ENCODE measurements at regions of chr17 and their contacts with region 1.

Region 1: GRCh38 chr17:34420254-34420766 is 57.3 kb upstream of the CCL1 start:
- DNase-seq: peak; percentile 45 to 80
- H3K4me3 ChIP-seq: no peak overlapping the region
- H3K4me1 ChIP-seq: no peaks in the 10 kb centered on the region
- H3K27me3 ChIP-seq: 0 out of 2 replicates have a peak, but pooled peaks cover 2% of the 10 kb centered on the region

Region 2: DNA sequence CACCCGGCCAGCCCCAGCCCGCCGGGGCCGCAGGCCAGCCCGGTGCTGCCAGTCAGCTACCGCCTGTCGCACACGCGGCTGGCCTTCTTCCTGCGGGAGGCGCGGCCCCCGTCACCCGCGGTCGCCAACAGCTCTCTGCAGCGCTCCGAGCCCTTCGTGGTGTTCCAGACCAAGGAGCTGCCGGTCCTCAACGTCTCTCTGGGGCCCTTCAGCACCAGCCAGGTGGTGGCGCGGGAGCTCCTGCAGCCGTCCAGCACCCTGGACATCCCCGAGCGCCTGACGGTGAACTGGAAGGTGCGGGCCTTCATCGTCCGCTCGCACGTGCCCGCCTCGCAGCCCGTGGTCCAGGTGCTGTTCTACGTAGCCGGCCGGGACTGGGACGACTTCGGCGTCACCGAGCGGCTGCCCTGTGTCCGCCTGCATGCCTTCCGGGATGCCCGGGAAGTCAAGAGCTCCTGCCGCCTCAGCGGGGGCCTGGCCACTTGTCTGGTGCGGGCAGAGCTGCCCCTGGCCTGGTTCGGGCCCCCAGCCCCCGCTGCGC is 205.9 kb after region 1 on chr17:
- in situ Hi-C with region 1: loop called (anchors 10 kb)
- DNase-seq: no peak
- H3K4me3 ChIP-seq: no peak overlapping the region
- H3K4me1 ChIP-seq: no peaks in the 10 kb centered on the region
- H3K27me3 ChIP-seq: peaks cover 25% of the 10 kb centered on the region

Region 3: GRCh38 chr17:34892461-34893249 is 472.3 kb after region 1 on chr17:
- in situ Hi-C with region 1: loop called (anchors 10 kb)
- DNase-seq: peak in 1 of 2 experiments; percentile 29
- H3K4me3 ChIP-seq: no peak overlapping the region
- H3K4me1 ChIP-seq: no peaks in the 10 kb centered on the region
- H3K27me3 ChIP-seq: peaks cover 4% of the 10 kb centered on the region

Region 4: DNA sequence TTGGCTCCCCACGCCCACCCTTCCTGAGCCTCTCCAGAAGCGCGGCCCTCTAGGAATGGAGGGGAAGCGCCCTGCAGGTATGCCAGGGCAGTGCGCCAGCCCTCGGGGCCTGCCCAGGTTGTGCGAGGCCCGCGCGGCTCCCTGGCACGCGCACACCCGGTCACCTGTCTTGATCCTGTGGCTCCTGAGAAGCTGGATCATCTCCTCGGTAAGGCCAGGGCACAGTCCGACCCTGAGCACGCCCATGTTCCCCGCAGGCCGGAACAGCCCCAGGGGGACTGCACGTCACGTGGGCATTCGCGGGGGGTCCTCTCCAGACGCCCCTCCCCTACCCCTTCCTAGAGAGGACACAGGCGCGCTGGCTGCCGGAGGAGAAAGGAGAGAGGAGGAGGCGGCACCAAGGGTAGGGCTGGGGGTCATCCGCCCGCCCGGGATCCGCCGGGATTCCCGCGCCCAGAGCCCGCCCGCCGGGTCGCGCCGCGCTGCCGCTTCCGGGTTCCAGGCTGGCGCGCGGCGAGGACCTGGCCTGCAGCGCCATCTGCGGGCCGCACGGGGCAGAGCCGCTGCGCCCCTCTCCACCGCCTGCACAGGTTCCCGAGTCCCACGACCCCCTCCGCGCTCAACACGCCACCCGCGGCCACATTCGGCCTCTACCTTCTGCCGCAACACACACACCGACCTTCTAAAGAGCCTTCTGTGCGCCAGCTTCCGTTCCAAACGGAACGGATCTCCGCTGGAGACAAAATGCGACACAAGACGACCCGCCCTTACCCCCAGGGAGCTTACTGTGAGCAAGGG is 699.3 kb after region 1 on chr17 and contains the start of gene RAD51D:
- in situ Hi-C with region 1: loop called (anchors 10 kb)
- DNase-seq: peak; percentile 83 to 92
- H3K4me3 ChIP-seq: peak within 1 kb of the TSS; percentile 68
- H3K4me1 ChIP-seq: peaks cover 7% of the 10 kb centered on the region
- H3K27me3 ChIP-seq: no peaks in the 10 kb centered on the region

Region 5: DNA sequence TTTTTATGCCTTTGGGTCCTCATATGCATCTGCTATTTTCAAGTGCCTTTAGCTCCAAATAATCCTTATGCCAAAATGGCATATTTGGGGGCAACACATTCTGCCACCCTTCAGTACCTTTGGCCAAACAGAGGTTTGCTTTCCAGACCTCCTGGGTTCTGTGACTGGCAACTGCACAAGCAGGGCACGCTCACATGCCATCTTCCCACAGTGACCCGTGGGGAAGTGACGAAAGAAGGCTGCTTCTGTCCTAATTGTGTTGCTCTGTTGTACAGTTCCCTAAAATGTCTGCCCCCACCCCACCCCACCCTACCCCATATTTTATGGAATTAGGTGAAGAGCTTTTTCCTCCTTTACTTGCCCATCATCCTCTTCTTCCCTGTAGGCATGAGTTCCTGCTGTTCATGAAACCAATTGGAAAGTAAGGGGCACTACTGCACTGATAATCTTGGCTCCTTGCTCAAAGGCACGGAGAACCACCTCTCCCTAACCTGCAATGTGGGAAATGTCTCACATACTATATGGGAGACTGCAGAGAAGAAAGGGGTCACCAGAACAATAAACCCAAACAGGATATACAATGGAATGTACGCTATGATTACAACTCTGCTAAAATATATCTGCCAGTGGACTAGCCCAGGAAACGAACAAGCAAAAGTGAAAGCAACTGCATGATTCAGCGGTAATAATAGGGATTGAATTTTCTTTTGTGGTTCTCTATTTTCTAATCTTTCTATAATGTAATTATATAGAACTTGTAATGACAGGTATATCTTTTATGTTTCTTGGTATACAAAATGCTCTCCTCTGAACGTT is 1120.5 kb after region 1 on chr17:
- in situ Hi-C with region 1: loop called (anchors 25 kb)
- DNase-seq: no peak
- H3K4me3 ChIP-seq: no peak overlapping the region
- H3K4me1 ChIP-seq: no peaks in the 10 kb centered on the region; the same call in none of the 2 replicates
- H3K27me3 ChIP-seq: peaks cover 5% of the 10 kb centered on the region; the same call in 1 of the 2 replicates

Measured in HAP-1 (cell line).